SK-N-SH (cell line): ENCODE measurements at regions of chr10 and their contacts with region 1.

Region 1: DNA sequence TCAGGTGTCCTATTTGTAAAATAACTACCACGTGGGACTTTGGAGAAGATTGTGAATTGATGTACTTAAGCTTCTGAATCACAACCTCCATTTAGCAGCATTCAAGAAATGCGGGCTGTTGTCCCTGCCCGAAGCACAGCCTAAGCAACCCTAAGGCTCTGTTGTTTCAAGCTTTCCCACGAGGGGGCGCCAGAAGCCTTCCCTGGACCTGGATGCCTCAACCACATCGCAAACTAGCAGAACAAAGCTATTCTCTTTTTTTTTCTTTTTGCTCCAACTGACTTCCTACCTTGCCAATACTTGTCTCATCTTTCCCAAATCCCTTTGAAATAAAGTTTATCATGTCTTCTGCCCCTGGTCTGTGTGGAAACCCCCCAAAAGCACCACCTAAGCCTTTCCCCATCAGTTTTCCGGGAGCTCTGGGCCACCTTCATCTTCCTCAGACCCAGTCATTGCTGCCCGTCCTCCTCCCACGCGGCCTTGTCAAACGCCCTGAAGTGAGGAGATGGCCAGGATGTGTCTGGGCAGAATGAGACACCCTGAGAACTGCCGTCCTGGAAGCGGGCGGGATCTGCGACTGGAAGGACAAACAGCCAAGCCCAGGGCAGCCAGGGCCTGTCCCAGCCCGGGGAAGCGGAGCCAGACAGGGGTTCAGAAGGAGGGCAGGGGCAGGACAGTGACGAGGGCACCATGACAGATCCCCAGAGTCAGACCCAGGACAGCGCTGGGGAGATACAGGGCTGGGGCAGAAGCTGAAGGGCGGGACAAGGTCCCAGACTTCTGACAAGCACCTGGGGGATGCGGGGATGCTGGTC is 112.7 kb downstream of the SLIT1 start:
- DNase-seq: peak; percentile 87
- H3K4me3 ChIP-seq: no peak overlapping the region
- H3K27ac ChIP-seq: no peak overlapping the region
- H3K4me1 ChIP-seq: peaks cover 0 to 30% of the 10 kb centered on the region in 2 experiments; a peak in 1 of 4 replicates
- H3K27me3 ChIP-seq: peaks cover 17% of the 10 kb centered on the region
- CTCF ChIP-seq: peak; percentile 89
- EP300 ChIP-seq: no peak
- RAD21 ChIP-seq: peak; percentile 98

Region 2: GRCh38 chr10:97048649-97049427 is 24.2 kb before region 1 on chr10:
- CTCF ChIA-PET with region 1: interaction called, 21 read pairs
- POLR2A ChIA-PET with region 1: no interaction called
- DNase-seq: no peak
- H3K4me3 ChIP-seq: no peak overlapping the region
- H3K27ac ChIP-seq: no peak overlapping the region
- H3K4me1 ChIP-seq: peaks cover 0 to 13% of the 10 kb centered on the region in 2 experiments; a peak in 2 of 4 replicates
- H3K27me3 ChIP-seq: peaks cover 9% of the 10 kb centered on the region; the same call in 1 of the 2 replicates
- CTCF ChIP-seq: no peak
- EP300 ChIP-seq: no peak
- RAD21 ChIP-seq: no peak

Region 3: GRCh38 chr10:97096261-97097083 is 23.4 kb after region 1 on chr10:
- CTCF ChIA-PET with region 1: interaction called, 50 read pairs
- POLR2A ChIA-PET with region 1: interaction called, 6 read pairs
- DNase-seq: peak; percentile 73
- H3K4me3 ChIP-seq: no peak overlapping the region
- H3K27ac ChIP-seq: peak overlapping the region in 1 of 2 experiments; percentile 28; a peak in 2 of 4 replicates
- H3K4me1 ChIP-seq: peaks cover 0 to 29% of the 10 kb centered on the region in 2 experiments; a peak in 1 of 4 replicates
- H3K27me3 ChIP-seq: peaks cover 39% of the 10 kb centered on the region; the same call in 1 of the 2 replicates
- CTCF ChIP-seq: no peak
- EP300 ChIP-seq: no peak
- RAD21 ChIP-seq: no peak

Region 4: DNA sequence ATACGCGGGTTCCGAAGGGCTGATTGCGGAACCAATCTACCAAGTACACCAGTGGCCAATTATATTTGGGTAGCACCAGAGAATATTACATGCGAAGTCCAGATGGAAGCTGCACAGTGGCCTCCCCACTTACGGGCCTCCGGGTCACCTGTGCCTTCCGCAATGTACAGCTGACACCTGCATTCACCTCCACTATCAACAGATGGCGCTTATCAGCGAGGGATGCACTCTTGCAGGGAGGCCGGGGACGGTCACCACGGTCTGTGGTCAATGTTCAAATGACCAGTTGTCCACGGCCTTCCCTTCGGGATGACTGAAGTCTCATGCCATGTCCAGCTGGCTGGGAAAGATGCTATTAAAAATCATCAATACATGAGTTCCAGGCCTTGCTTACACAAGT is 65.1 kb after region 1 on chr10:
- CTCF ChIA-PET with region 1: interaction called, 42 read pairs
- POLR2A ChIA-PET with region 1: no interaction called
- DNase-seq: no peak
- H3K4me3 ChIP-seq: no peak overlapping the region
- H3K27ac ChIP-seq: no peak overlapping the region
- H3K4me1 ChIP-seq: peaks cover 0 to 29% of the 10 kb centered on the region in 2 experiments; a peak in 2 of 4 replicates
- H3K27me3 ChIP-seq: peaks cover 23% of the 10 kb centered on the region
- CTCF ChIP-seq: no peak
- EP300 ChIP-seq: no peak
- RAD21 ChIP-seq: peak; percentile 37

Region 5: DNA sequence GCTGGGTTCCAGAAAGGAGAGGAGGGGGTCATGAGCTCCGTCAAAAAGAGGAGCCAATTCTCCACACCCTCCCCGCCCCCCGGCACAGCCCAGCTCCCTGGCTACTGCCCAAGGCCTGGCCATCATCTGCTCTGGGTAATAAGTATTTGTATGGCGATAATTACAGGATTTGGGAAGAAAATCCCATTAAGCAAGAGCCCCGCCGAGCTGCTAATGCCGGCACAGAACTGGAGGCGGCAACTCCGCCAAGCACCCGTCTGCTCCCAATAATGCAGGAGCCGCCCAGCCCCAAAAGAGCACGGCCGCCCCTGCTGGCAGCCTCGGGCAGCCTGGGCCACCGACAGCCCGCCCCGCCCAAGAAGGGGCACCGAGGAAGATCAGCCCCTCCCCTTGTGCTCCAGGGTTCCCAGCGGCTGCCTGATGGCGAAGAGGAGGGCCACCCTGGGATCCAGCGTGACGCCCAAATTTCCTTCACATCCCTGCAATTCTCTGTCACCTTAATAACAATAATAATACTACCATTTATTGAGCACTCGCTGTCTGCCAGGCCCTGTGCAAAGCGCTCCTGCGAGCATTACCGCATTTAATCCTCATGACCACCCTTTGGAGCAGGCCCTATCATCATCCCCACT is 106.8 kb after region 1 on chr10:
- CTCF ChIA-PET with region 1: interaction called, 207 read pairs
- POLR2A ChIA-PET with region 1: no interaction called
- DNase-seq: peak; percentile 84
- H3K4me3 ChIP-seq: peak overlapping the region in 1 of 2 experiments; percentile 17; a peak in 1 of 4 replicates
- H3K27ac ChIP-seq: peak overlapping the region in 1 of 2 experiments; percentile 97; a peak in 2 of 4 replicates
- H3K4me1 ChIP-seq: peaks cover 0 to 68% of the 10 kb centered on the region in 2 experiments; a peak in 3 of 4 replicates
- H3K27me3 ChIP-seq: peaks cover 46% of the 10 kb centered on the region; the same call in 1 of the 2 replicates
- CTCF ChIP-seq: peak; percentile 40
- EP300 ChIP-seq: 0 out of 4 replicates have a peak, but pooled peaks of 1 of the 2 experiments have one; percentile 32
- RAD21 ChIP-seq: peak; percentile 70

Region 6: DNA sequence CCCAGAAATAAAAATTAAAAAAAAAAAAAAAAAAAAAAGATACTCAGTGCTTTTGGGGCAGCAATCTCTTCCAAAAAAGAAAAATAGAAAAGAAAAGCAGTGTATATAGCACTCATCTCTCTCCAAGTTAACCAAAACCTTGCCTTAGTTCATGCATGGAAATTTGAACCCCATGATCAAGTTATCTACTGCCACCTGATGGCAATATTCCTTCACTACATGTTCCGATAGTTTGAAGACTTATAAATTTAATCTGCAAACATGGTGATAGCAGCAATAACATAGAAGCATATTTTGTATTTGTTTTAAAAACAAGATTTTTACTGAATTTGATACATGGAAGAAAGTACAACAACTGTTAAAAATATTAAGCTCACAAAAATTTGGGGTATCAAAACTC is 161.3 kb after region 1 on chr10:
- CTCF ChIA-PET with region 1: interaction called, 105 read pairs
- POLR2A ChIA-PET with region 1: no interaction called
- DNase-seq: peak; percentile 49
- H3K4me3 ChIP-seq: no peak overlapping the region
- H3K27ac ChIP-seq: no peak overlapping the region
- H3K4me1 ChIP-seq: no peaks in the 10 kb centered on the region
- H3K27me3 ChIP-seq: no peaks in the 10 kb centered on the region
- CTCF ChIP-seq: peak; percentile 82
- EP300 ChIP-seq: no peak
- RAD21 ChIP-seq: peak; percentile 84

Region 7: DNA sequence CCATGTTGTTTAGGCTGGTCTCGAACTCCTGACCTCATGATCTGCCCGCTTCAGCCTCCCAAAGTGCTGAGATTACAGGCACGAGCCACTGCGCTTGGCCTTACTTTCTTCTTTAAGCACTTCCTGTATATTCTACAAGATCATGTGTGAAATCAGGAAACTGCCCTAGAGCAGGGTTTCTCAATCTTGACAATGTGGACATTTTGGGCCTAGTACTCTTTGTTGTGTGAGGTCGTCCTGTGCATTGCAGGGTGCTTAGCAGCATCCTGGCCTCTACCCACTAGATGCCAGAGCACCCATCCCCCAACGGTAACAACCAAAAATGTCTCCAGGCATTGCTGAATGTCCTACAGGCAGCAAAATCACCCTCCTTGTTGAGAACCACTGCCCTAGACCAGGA is 303.4 kb after region 1 on chr10:
- CTCF ChIA-PET with region 1: no interaction called
- POLR2A ChIA-PET with region 1: no interaction called
- DNase-seq: no peak
- H3K4me3 ChIP-seq: no peak overlapping the region
- H3K27ac ChIP-seq: no peak overlapping the region
- H3K4me1 ChIP-seq: no peaks in the 10 kb centered on the region
- H3K27me3 ChIP-seq: no peaks in the 10 kb centered on the region
- CTCF ChIP-seq: no peak
- EP300 ChIP-seq: no peak
- RAD21 ChIP-seq: no peak